PC-9 (cell line): ENCODE measurements at regions of chr20 and their contacts with region 1.

Region 1: DNA sequence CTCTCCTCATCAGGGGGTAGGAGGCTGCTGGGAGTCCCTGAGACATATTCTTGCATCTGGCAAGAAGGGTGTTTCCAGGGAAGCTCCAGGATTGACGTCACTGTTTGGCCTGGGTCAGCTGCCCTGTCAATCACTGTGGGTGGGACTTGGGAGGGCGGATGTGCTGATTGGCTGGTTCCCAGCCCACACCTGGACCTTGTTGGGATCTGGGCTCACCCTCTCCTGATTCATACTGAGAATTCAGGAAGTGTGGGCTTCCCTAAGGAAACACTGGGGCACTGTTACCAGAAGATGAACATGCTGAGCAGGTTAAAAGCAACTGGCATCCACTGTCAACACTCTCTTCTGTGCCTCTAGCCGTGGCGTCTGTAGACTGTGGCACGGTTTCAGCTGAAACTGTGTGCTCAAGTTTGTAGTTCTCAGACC is 36.5 kb downstream of the CDH26 start:
- DNase-seq: peak; percentile 42 to 68
- H3K4me3 ChIP-seq: no peak overlapping the region
- H3K27ac ChIP-seq: no peak overlapping the region
- H3K4me1 ChIP-seq: peaks cover 29% of the 10 kb centered on the region
- H3K27me3 ChIP-seq: no peaks in the 10 kb centered on the region
- CTCF ChIP-seq: no peak

Region 2: DNA sequence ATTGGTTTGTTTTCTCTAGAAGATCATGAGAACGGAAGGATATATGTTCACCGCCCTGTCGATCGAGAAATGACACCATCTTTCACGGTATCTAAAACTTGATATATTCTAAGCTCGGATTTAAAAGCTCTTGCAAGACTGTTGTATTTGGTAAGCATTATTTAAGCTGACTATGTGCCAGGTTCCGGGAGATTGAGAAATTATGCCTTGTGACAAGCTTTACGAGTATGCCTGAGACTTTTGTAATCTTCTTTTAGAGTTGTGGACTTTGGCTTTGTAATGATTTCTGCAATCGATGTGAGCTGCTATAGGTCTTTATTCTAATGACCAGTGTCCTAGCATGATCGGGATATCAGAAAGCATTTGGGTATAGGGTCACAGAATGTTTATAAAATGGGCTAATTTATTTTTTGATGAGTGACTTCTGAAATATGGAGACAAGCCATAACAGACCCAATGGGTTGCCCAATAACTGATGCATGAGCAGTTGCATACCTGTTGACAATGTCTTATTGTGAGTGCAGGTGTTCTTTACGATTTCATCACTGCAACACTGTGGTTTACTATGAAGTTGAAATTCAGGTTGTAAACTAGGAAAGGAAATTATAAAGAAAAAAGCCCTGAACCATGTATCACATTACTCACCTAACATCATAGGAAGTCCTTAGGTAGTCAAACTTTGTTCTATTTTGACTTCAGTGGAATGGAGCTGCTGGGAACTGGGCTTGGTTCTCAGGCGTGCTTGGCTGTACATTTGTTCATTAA is 22.5 kb before region 1 on chr20:
- CTCF ChIA-PET with region 1: no interaction called
- POLR2A ChIA-PET with region 1: no interaction called
- intact Hi-C with region 1: loop called (anchors 1 kb)
- DNase-seq: peak in 1 of 2 experiments; percentile 100
- H3K4me3 ChIP-seq: peak overlapping the region; percentile 45
- H3K27ac ChIP-seq: peak overlapping the region; percentile 89
- H3K4me1 ChIP-seq: peaks cover 52% of the 10 kb centered on the region
- H3K27me3 ChIP-seq: no peaks in the 10 kb centered on the region
- CTCF ChIP-seq: no peak

Region 3: GRCh38 chr20:60043435-60043834 is 48.7 kb after region 1 on chr20:
- CTCF ChIA-PET with region 1: no interaction called
- POLR2A ChIA-PET with region 1: no interaction called
- intact Hi-C with region 1: loop called (anchors 2 kb)
- DNase-seq: no peak
- H3K4me3 ChIP-seq: no peak overlapping the region
- H3K27ac ChIP-seq: no peak overlapping the region
- H3K4me1 ChIP-seq: peaks cover 23% of the 10 kb centered on the region
- H3K27me3 ChIP-seq: no peaks in the 10 kb centered on the region
- CTCF ChIP-seq: no peak

Region 4: DNA sequence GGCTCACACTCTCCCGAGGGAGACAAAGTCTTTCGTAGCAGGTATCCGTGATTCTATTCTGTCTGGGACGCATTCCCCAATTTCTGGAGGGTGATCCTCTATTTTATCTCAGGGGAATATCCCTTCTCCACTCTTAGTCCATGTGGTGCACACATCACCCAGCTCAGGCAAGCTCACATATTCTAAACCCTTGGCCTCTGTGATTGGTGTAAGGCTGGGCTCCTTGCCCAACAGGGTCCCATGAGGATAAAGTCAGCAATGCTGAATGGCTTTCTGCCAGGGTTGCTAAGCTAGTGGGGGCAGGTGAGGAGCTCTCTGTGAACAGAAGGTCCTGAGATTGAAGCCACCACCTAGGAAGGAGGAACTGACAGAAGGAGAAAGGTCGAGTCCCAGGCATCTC is 100.7 kb after region 1 on chr20:
- CTCF ChIA-PET with region 1: no interaction called
- POLR2A ChIA-PET with region 1: no interaction called
- intact Hi-C with region 1: no loop called
- DNase-seq: no peak
- H3K4me3 ChIP-seq: no peak overlapping the region
- H3K27ac ChIP-seq: no peak overlapping the region
- H3K4me1 ChIP-seq: no peaks in the 10 kb centered on the region
- H3K27me3 ChIP-seq: peaks cover 90% of the 10 kb centered on the region
- CTCF ChIP-seq: no peak

Region 5: DNA sequence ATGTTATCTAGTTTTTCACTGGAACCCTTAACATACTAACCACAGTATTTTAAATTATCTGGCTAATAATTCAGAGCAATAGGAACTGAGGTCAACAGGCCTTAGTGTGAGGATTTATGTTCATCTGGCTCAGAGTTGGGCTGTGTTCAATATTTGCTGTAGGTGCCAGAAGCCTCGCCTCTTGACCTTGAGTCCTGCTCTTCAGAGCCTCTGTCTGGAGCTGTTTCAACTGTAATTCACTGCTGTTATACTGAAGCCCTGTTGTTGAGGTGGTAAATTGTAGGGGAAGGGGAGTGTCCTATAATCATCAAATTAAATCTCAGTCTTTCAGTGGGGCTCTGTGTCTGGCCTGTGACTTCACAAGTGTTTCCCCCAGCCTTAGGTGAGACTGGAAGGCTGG is 147.9 kb after region 1 on chr20:
- CTCF ChIA-PET with region 1: no interaction called
- POLR2A ChIA-PET with region 1: no interaction called
- intact Hi-C with region 1: no loop called
- DNase-seq: no peak
- H3K4me3 ChIP-seq: no peak overlapping the region
- H3K27ac ChIP-seq: no peak overlapping the region
- H3K4me1 ChIP-seq: no peaks in the 10 kb centered on the region
- H3K27me3 ChIP-seq: peaks cover 87% of the 10 kb centered on the region
- CTCF ChIP-seq: no peak

Region 6: DNA sequence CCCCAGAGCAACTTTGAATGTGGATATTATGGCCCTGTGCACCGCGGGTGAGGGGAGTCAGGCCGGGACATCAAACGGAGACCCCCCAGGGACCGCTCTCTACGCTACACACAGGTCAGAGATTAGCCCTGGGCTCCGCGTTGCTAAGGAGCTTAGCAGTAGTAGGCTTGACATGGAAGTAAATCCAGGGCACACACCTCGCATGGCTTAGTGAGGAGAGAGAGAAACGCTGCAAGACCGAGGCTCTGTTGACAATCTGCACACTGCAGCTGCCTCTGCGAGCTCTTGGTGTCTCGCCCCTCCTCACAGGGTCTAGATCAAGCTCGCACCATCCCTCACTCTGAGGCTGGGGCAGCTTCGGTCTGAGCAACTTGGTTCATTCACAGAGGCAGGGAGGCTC is 1141.3 kb after region 1 on chr20:
- CTCF ChIA-PET with region 1: no interaction called
- POLR2A ChIA-PET with region 1: no interaction called
- intact Hi-C with region 1: no loop called
- DNase-seq: no peak
- H3K4me3 ChIP-seq: no peak overlapping the region
- H3K27ac ChIP-seq: no peak overlapping the region
- H3K4me1 ChIP-seq: no peaks in the 10 kb centered on the region
- H3K27me3 ChIP-seq: peaks cover 98% of the 10 kb centered on the region
- CTCF ChIP-seq: no peak